ENCODE measurements at regions of chr12 and their contacts with region 1.

Region 1: DNA sequence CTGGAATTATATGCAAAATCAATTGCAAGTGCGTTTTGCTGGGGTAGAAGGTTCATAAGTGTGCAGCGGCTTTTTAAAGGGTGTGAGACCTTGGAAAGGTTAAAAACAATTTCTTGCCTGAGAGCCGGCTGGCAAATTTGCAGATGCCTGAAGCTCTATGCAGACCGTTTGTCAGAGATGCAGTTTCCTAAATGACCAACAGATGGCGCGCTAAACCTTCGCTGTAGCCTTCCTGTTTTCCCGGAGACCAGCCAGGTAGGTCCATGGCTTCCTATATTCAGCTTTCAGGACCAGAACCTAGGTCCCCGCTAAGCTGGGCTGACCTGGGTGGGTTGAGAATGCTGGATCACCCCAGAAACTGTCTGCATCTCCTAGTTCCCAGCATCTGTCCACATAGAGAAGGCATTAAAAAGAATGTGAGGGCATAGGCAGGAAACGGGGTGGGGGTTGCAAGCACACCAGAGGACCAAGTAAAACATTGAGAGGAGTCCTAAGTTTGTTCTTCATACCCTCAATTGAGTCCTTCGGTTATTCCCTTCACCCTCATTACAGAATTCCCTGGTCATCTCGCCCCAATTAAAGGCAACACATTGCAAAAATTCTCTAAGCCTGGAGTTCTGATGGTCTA is 5.7 kb upstream of the NOS1 start:
- DNase-seq: peak; percentile 11
- H3K4me3 ChIP-seq: no peak overlapping the region
- H3K27me3 ChIP-seq: peaks cover 3% of the 10 kb centered on the region
- CTCF ChIP-seq: peak; percentile 85

Region 2: DNA sequence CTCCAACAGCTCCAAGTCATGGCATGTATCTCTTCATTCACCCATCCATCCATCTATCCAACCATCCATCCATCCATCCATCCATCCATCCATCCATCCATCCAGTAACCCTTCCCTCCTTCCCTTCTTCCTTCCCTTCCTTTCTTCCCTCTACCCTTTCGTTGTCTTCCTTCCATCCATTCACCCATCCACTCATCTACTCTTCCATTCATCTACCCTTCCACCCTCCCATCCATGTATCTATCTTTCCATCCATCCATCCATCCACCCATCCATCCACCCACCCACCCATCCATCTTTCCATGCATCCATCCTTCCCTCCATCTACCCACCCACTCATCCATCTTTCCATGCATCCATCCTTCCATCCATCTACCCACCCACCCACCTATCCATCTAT is 123.6 kb before region 1 on chr12:
- CTCF ChIA-PET with region 1: no interaction called
- POLR2A ChIA-PET with region 1: no interaction called
- DNase-seq: no peak
- H3K4me3 ChIP-seq: no peak overlapping the region
- H3K27me3 ChIP-seq: no peaks in the 10 kb centered on the region
- CTCF ChIP-seq: no peak

Region 3: GRCh38 chr12:117587631-117588287 is 220.6 kb after region 1 on chr12:
- CTCF ChIA-PET with region 1: interaction called, 28 read pairs
- POLR2A ChIA-PET with region 1: no interaction called
- DNase-seq: no peak
- H3K4me3 ChIP-seq: no peak overlapping the region
- H3K27me3 ChIP-seq: no peaks in the 10 kb centered on the region
- CTCF ChIP-seq: peak; percentile 76

Region 4: DNA sequence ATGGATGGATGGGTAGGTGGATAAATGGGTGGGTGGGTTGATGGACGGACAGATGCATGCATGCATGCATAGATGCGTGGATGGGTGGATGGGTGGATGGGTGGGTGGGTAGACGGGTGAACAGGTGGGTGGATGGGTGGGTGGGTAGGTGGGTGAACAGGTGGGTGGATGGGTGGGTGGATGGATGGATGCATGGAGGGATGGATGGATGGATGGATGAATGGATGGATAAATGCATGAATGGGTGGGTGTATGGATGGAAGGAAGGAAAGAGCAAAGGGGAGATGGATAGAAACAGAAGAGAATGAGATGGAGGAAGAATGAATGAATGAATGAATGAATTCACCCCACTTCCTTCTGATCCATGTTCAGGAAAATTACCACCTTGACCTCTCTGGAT is 458.7 kb after region 1 on chr12:
- CTCF ChIA-PET with region 1: interaction called, 342 read pairs
- POLR2A ChIA-PET with region 1: no interaction called
- DNase-seq: no peak
- H3K4me3 ChIP-seq: no peak overlapping the region
- H3K27me3 ChIP-seq: no peaks in the 10 kb centered on the region
- CTCF ChIP-seq: no peak

Region 5: DNA sequence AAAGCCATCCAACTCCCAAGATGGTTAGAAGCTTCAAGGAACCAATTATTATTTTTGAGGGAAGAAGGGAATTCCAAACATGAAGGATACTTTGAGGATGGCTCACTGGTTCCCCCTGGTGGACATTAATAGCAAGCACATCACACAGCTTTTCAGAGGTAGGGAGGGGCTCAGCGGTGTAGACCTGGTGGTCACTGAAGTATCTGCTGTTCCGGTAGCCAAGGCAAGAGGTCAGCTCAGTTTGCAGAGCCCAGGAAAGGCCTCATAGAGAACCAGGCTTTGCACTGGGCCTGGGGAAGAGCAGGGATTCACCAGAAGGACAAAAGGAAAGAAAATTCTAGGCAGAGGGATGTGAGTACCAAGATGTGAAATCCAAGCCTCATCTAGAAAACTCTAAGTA is 482.9 kb after region 1 on chr12:
- CTCF ChIA-PET with region 1: interaction called, 88 read pairs
- POLR2A ChIA-PET with region 1: no interaction called
- DNase-seq: no peak
- H3K4me3 ChIP-seq: no peak overlapping the region
- H3K27me3 ChIP-seq: peaks cover 5% of the 10 kb centered on the region; the same call in 1 of the 2 replicates
- CTCF ChIP-seq: peak; percentile 90

Region 6: GRCh38 chr12:117857632-117858612 is 490.8 kb after region 1 on chr12:
- CTCF ChIA-PET with region 1: interaction called, 88 read pairs
- POLR2A ChIA-PET with region 1: no interaction called
- DNase-seq: no peak
- H3K4me3 ChIP-seq: no peak overlapping the region
- H3K27me3 ChIP-seq: no peaks in the 10 kb centered on the region; the same call in 1 of the 2 replicates
- CTCF ChIP-seq: peak; percentile 72